Activated T-helper 2 cell treated with anti-CD3 and anti-CD28 coated beads, Interferon-gamma antibody, Interleukin-2, Interleukin-4, amounts not matched to agents 10 μg/mL and 5 μg/mL and 100 μg/mL, durations not matched to agents 14 hours and 24 hours and 36 hours (primary cell): ENCODE measurements at regions of chr4 and their contacts with region 1.

Region 1: DNA sequence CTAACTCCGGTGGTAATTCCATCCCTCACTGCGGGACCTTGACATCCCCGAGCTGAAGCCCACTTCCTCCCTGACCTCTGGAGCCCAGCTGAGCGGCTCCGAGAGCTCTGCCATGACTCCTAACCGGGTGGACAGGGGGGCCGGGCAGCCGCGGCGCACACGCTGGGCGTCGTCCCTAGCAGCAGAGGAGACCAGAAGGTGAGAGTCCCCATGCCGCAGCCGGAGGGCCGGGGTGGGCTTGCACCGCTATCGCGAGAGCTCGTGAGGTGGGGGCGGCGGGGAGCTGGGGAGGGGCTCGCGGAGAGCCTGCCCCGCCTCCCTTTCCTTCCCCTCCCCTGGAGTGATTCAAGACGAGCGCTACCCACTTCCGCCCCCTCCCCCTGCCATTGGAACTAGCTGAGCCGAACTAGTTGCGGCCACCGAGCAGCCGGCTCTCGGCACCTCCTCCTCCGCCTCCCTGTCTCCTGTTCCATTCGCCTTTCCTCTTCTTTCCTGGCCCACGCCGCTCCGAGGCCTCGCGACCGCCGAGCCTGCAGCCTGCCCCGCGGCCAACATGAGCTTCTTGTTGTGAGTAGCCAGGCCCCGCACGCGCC is at the start of gene MOB1B:
- DNase-seq: peak; percentile 81
- H3K4me3 Mint-ChIP-seq: peak within 1 kb of the TSS; percentile 99
- H3K27ac Mint-ChIP-seq: peak within 1 kb of the TSS; percentile 86
- H3K4me1 Mint-ChIP-seq: peaks cover 20% of the 10 kb centered on the region
- H3K27me3 Mint-ChIP-seq: no peaks in the 10 kb centered on the region
- total RNA-seq, gene MOB1B: 27.0 and 28.1 TPM in 2 replicates

Region 2: DNA sequence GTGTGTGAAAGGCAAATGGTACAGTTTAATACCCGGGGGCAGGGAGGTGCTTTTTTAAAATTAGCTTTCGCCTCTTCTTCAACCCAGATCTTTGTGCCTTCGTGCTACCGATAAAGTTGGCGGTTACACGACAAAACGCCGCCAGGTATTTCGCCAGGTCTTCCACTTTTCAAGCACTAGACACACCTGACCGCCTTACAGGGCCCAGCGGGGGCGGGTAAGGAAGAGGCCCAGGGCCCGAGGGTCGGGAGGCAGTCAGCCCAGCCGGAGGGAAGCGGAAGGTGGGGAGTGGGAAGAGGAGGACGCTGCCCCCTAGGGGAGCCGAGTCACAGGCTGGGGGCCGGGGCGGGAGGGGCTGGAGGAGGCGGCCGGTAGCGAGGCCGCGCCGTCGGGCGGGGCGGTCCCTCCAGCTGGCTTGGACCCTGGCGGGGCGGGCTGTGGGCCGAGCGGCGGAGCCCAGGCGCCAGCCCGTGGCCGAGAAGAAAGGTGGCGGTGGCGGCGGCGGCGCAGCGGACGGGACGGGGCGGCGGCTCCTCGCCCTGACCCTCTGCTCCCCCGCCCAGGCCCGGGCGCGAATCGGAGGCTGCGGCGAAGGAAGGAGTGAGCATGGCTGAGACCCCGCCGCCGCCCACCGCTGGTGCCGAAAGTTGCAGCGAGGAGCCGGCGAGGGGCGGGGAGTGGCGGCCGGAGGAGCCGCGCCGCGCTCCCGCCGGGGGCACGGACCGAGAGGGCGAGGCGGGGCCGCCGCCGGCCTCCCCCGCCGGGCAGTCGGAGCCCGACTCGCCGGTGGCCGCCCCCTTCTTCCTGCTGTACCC is 197.5 kb before region 1 on chr4:
- intact Hi-C with region 1: loop called (anchors 5 kb)
- DNase-seq: peak; percentile 40
- H3K4me3 Mint-ChIP-seq: peak overlapping the region; percentile 84
- H3K27ac Mint-ChIP-seq: peak overlapping the region; percentile 81
- H3K4me1 Mint-ChIP-seq: peaks cover 27% of the 10 kb centered on the region
- H3K27me3 Mint-ChIP-seq: no peaks in the 10 kb centered on the region

Region 3: GRCh38 chr4:70734168-70734954 is 167.7 kb before region 1 on chr4:
- intact Hi-C with region 1: loop called (anchors 10 kb)
- DNase-seq: peak; percentile 41
- H3K4me3 Mint-ChIP-seq: peak overlapping the region; percentile 74
- H3K27ac Mint-ChIP-seq: peak overlapping the region; percentile 79
- H3K4me1 Mint-ChIP-seq: peaks cover 40% of the 10 kb centered on the region
- H3K27me3 Mint-ChIP-seq: no peaks in the 10 kb centered on the region

Region 4: GRCh38 chr4:70839589-70840093 is 62.4 kb before region 1 on chr4 and contains the start of gene GRSF1:
- intact Hi-C with region 1: loop called (anchors 1 kb)
- DNase-seq: peak; percentile 91
- H3K4me3 Mint-ChIP-seq: peak within 1 kb of the TSS; percentile 92
- H3K27ac Mint-ChIP-seq: peak within 1 kb of the TSS; percentile 96
- H3K4me1 Mint-ChIP-seq: peaks cover 45% of the 10 kb centered on the region
- H3K27me3 Mint-ChIP-seq: no peaks in the 10 kb centered on the region
- total RNA-seq, gene GRSF1: 120 and 121 TPM in 2 replicates

Region 5: GRCh38 chr4:70863099-70863790 is 38.8 kb before region 1 on chr4:
- intact Hi-C with region 1: loop called (anchors 5 kb)
- DNase-seq: no peak
- H3K4me3 Mint-ChIP-seq: no peak overlapping the region
- H3K27ac Mint-ChIP-seq: peak overlapping the region; percentile 59
- H3K4me1 Mint-ChIP-seq: peaks cover 10% of the 10 kb centered on the region
- H3K27me3 Mint-ChIP-seq: no peaks in the 10 kb centered on the region

Region 6: GRCh38 chr4:70927502-70928137 is 25.5 kb after region 1 on chr4:
- intact Hi-C with region 1: loop called (anchors 2 kb)
- DNase-seq: no peak
- H3K4me3 Mint-ChIP-seq: peak overlapping the region; percentile 5
- H3K27ac Mint-ChIP-seq: peak overlapping the region; percentile 60
- H3K4me1 Mint-ChIP-seq: peaks cover 43% of the 10 kb centered on the region
- H3K27me3 Mint-ChIP-seq: no peaks in the 10 kb centered on the region

Region 7: GRCh38 chr4:70993181-70994068 is 91.3 kb after region 1 on chr4 and contains the start of gene DCK:
- intact Hi-C with region 1: loop called (anchors 1 kb)
- DNase-seq: peak; percentile 83
- H3K4me3 Mint-ChIP-seq: peak within 1 kb of the TSS; percentile 99
- H3K27ac Mint-ChIP-seq: peak within 1 kb of the TSS; percentile 93
- H3K4me1 Mint-ChIP-seq: peaks cover 39% of the 10 kb centered on the region
- H3K27me3 Mint-ChIP-seq: no peaks in the 10 kb centered on the region
- total RNA-seq, gene DCK: 35.1 and 35.3 TPM in 2 replicates

Region 8: DNA sequence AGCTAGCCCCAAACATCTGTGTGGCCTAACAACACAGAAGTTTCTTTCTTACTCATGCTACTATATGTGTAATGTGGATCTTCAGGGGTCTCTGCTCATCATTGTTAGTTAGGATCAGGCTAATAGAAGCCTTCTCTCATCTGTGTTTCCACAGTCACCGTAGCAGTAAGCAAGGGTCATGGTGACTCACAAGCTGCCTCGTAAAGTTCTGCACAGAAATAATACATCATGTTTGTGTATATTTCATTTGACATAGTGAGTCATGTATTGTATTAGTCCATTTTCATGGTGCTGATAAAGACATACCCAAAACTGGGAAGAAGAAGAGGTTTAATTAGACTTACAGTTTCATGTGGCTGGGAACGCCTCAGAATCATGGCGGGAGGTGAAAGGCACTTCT is 475.5 kb after region 1 on chr4:
- intact Hi-C with region 1: no loop called
- DNase-seq: no peak
- H3K4me3 Mint-ChIP-seq: no peak overlapping the region
- H3K27ac Mint-ChIP-seq: no peak overlapping the region
- H3K4me1 Mint-ChIP-seq: no peaks in the 10 kb centered on the region
- H3K27me3 Mint-ChIP-seq: no peaks in the 10 kb centered on the region

Region 9: GRCh38 chr4:71456841-71457240 is 554.8 kb after region 1 on chr4:
- intact Hi-C with region 1: no loop called
- DNase-seq: no peak
- H3K4me3 Mint-ChIP-seq: no peak overlapping the region
- H3K27ac Mint-ChIP-seq: no peak overlapping the region
- H3K4me1 Mint-ChIP-seq: no peaks in the 10 kb centered on the region
- H3K27me3 Mint-ChIP-seq: no peaks in the 10 kb centered on the region